ENCODE measurements at regions of chr11 and their contacts with region 1.

Region 1: DNA sequence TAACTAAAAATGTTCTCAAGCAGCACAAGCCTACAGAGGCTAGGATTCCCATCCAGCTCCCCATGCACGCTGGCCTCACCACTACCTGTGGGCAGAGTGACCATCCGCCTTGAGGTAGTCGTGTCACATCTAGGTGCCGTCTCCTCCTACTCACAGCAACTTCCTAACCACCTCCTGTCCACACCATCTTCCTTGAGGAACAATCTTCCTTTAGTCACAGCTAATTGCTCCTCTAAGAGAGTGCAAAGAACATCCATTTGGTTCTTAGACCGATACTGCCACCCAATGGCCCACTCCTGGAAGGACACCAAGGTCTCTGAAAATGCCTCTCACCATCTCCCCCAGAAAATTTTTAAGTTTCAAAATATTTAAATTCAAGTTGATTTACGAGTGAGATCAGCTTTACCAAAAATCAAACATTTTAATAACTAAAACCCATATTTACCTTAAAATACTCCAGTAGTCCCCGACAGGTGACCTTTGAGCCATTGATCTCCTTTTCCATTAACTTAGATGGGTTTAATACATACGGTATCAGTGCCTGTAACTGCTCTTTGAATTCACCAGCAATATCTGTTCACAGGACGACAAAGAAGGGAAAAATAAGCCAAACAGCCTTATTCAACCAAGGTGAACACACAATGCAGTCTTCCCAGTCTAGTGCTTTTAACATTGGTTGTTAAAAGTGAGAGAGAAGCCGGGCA is 21.7 kb upstream of the PLAAT3 start:
- DNase-seq: peak; percentile 22 to 49
- ATAC-seq: peak; percentile 62 to 80 (median 74)
- H3K4me3 ChIP-seq: no peak overlapping the region
- H3K27ac ChIP-seq: no peak overlapping the region
- H3K4me1 ChIP-seq: peaks cover 0 to 8% (median 0%) of the 10 kb centered on the region in 9 donors
- H3K27me3 ChIP-seq: no peaks in the 10 kb centered on the region
- CTCF ChIP-seq: peak; percentile 64 to 92 (median 84)

Region 2: DNA sequence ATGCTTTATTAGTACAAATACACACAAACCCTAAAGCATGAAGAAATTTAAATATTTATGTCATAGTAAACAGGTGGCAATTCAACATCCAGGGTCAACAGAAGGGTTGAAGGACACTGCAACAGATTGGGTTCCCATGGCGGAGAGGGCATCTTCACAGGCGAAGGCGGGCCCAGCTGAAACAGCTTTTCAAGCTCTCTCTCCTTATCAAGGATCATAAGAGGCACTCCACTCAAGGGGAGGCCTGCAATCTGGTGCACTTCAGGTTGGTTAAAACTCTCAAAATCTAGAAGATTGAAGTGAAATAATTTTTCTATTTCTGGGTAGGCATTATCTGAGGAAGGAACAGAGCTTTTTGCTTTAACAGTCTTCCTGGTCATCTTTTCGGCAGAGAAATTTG is 603.5 kb before region 1 on chr11:
- intact Hi-C with region 1: loop called in 4 of 10 experiments (anchors 10 kb)
- DNase-seq: no peak
- ATAC-seq: no peak
- H3K4me3 ChIP-seq: no peak overlapping the region
- H3K27ac ChIP-seq: no peak overlapping the region
- H3K4me1 ChIP-seq: peaks cover 0 to 3% (median 0%) of the 10 kb centered on the region in 9 donors
- H3K27me3 ChIP-seq: peaks cover 0 to 27% (median 0%) of the 10 kb centered on the region in 7 donors
- CTCF ChIP-seq: no peak

Region 3: DNA sequence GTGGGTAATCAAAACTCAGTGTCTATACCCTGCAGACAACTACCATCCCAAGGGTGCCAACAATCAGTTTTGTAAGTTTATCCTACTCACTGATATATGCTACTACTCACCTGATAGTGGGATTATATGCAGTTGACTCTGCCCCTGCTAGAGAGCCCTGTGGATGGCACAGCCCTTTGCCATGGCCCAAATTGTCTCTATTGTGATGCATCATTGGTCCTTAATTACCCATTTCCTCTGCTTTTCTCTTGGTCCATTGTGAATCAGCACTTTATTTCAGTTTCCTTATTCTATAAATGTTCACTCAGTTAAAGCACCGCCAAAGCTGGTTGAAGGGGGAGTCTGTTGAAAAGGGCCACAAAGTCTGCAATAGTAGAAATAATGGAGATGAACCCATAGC is 187.3 kb before region 1 on chr11:
- intact Hi-C with region 1: no loop called
- DNase-seq: no peak
- ATAC-seq: no peak
- H3K4me3 ChIP-seq: no peak overlapping the region
- H3K27ac ChIP-seq: no peak overlapping the region
- H3K4me1 ChIP-seq: no peaks in the 10 kb centered on the region
- H3K27me3 ChIP-seq: peaks cover 0 to 17% (median 3%) of the 10 kb centered on the region in 7 donors
- CTCF ChIP-seq: no peak

Region 4: DNA sequence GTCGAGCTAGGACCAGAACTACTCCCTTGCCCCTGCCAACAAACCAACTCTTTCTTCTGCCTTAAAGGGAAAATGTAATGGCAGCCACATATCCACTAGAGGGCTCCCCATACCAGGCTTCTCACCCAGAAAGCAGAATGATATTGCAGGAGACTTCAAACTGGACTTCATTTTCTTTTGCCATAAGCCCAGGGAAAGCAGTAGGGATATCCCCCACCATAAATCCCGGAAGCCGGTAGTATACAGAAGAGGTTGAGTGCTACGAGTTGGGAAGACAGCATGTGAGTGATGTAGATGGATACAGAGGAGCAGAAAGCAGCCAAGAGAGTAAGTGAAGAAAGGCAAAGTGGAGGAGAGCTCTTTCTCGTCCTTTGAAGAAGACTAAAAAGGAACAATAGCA is 157.0 kb before region 1 on chr11:
- intact Hi-C with region 1: loop called (anchors 1 to 5 kb)
- DNase-seq: peak in 1 of 2 donors; percentile 55
- ATAC-seq: peak; percentile 61 to 84 (median 80)
- H3K4me3 ChIP-seq: no peak overlapping the region
- H3K27ac ChIP-seq: no peak overlapping the region
- H3K4me1 ChIP-seq: peaks cover 0 to 2% (median 0%) of the 10 kb centered on the region in 9 donors
- H3K27me3 ChIP-seq: no peaks in the 10 kb centered on the region
- CTCF ChIP-seq: peak; percentile 77 to 93 (median 91)

Region 5: GRCh38 chr11:63551091-63551888 is 84.6 kb before region 1 on chr11:
- intact Hi-C with region 1: no loop called
- DNase-seq: no peak
- ATAC-seq: no peak
- H3K4me3 ChIP-seq: peak overlapping the region in 1 of 10 donors; percentile 5
- H3K27ac ChIP-seq: peak overlapping the region in 1 of 10 donors; percentile 50
- H3K4me1 ChIP-seq: peaks cover 0 to 24% (median 0%) of the 10 kb centered on the region in 9 donors
- H3K27me3 ChIP-seq: peaks cover 0 to 2% (median 0%) of the 10 kb centered on the region in 7 donors
- CTCF ChIP-seq: no peak

Region 6: DNA sequence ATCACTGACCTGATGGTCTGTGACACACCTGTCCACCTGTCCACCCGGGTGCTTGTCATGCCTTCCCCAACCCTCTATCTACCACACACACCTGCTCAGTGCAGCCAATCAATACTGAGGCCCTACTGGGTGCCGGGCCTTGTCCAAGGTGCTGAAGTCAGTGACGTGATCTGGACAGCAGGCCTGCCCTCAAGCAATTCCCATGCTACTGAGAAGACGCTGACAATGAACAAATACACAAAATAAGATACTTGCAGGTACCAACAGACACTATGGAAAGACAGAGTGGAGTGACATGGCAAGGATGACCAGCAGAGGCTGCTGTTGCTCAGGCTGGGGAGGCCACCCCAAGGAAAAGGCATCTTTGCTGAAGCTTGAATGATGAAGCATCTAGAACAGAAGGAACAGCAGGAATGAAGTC is 42.9 kb before region 1 on chr11:
- intact Hi-C with region 1: loop called in 1 of 10 experiments (anchors 5 kb)
- DNase-seq: no peak
- ATAC-seq: peak in 1 of 8 donors; percentile 38
- H3K4me3 ChIP-seq: no peak overlapping the region
- H3K27ac ChIP-seq: no peak overlapping the region
- H3K4me1 ChIP-seq: peaks cover 0 to 10% (median 0%) of the 10 kb centered on the region in 9 donors
- H3K27me3 ChIP-seq: no peaks in the 10 kb centered on the region
- CTCF ChIP-seq: peak in 7 of 9 donors; percentile 39 to 61 (median 44)

Region 7: GRCh38 chr11:63745304-63746170 is 109.6 kb after region 1 on chr11:
- intact Hi-C with region 1: loop called in 1 of 10 experiments (anchors 10 kb)
- DNase-seq: no peak
- ATAC-seq: peak in 1 of 8 donors; percentile 14
- H3K4me3 ChIP-seq: no peak overlapping the region
- H3K27ac ChIP-seq: no peak overlapping the region
- H3K4me1 ChIP-seq: peaks cover 0 to 5% (median 0%) of the 10 kb centered on the region in 9 donors
- H3K27me3 ChIP-seq: no peaks in the 10 kb centered on the region
- CTCF ChIP-seq: peak in 5 of 9 donors; percentile 11 to 29 (median 22)